A549 (cell line): ENCODE measurements at regions of chr17 and their contacts with region 1.

Region 1: GRCh38 chr17:72556944-72557826 is 436.4 kb downstream of the SOX9 start:
- DNase-seq: peak; percentile 83 to 93
- ATAC-seq: peak; percentile 51 to 62
- H3K4me3 ChIP-seq: no peak overlapping the region
- H3K27ac ChIP-seq: peak overlapping the region in 1 of 2 experiments; percentile 61; a peak in 3 of 6 replicates
- H3K4me1 ChIP-seq: peaks cover 45% of the 10 kb centered on the region
- CTCF ChIP-seq: peak; percentile 97
- EP300 ChIP-seq: no peak
- POLR2A ChIP-seq: no peak
- RAD21 ChIP-seq: peak; percentile 94

Region 2: DNA sequence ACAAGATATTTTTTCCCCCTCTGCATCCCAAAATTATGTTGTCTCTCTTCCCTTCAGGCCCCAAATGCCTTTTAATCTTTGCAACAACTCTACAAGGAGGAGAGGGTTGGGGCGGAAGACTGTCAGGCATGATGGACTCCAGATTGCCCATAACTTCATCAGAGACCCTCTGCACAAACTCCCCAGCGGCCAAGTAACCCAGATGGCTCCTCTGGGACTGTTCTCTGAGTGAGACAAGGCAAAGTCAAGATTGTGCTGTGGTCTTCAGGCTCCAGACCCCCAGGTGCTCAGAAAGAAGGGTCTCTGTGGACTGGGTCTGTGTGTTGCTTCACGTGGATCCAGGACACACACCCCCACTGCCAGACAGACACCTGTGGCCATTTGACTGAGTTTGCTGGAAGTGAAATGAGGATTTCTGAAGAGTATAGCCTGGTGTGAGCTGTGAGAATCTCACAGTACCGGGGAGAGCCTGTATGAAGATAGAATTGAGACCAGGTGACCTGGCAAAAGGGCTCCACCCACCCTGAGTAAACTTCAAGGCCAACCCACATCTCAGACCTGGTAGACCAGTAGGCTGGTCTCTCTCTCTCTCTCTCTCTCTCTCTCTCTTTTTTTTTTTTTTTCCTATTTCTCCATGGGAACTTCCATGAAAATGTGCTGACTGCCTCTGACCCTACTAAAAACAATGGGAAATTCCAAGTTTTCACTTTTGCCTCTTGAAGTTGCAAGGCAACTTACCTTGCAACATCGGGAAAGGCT is 82.3 kb before region 1 on chr17:
- CTCF ChIA-PET with region 1: no interaction called
- POLR2A ChIA-PET with region 1: no interaction called
- DNase-seq: peak in 1 of 2 experiments; percentile 55
- ATAC-seq: peak; percentile 75 to 77
- H3K4me3 ChIP-seq: no peak overlapping the region
- H3K27ac ChIP-seq: peak overlapping the region; percentile 3 to 37; a peak in 3 of 6 replicates
- H3K4me1 ChIP-seq: peaks cover 71% of the 10 kb centered on the region
- CTCF ChIP-seq: no peak
- EP300 ChIP-seq: no peak
- POLR2A ChIP-seq: no peak
- RAD21 ChIP-seq: no peak

Region 3: GRCh38 chr17:72539981-72540897 is 16.9 kb before region 1 on chr17:
- CTCF ChIA-PET with region 1: interaction called, 32 read pairs
- POLR2A ChIA-PET with region 1: no interaction called
- DNase-seq: peak; percentile 79 to 86
- ATAC-seq: peak; percentile 90 to 94
- H3K4me3 ChIP-seq: peak overlapping the region; percentile 22
- H3K27ac ChIP-seq: peak overlapping the region; percentile 82 to 87
- H3K4me1 ChIP-seq: peaks cover 25% of the 10 kb centered on the region
- CTCF ChIP-seq: peak; percentile 99
- EP300 ChIP-seq: no peak
- POLR2A ChIP-seq: no peak
- RAD21 ChIP-seq: peak; percentile 92 to 100

Region 4: GRCh38 chr17:72602517-72603419 is 45.6 kb after region 1 on chr17:
- CTCF ChIA-PET with region 1: interaction called, 112 read pairs
- POLR2A ChIA-PET with region 1: interaction called, 4 read pairs
- DNase-seq: peak; percentile 97
- ATAC-seq: peak; percentile 92 to 93
- H3K4me3 ChIP-seq: 0 out of 3 replicates have a peak overlapping the region, but pooled peaks have one; percentile 10
- H3K27ac ChIP-seq: peak overlapping the region; percentile 90 to 95
- H3K4me1 ChIP-seq: peaks cover 65% of the 10 kb centered on the region
- CTCF ChIP-seq: no peak
- EP300 ChIP-seq: peak; percentile 72 to 79; a peak in 2 of 5 replicates
- POLR2A ChIP-seq: no peak
- RAD21 ChIP-seq: peak; percentile 32 to 33; a peak in 2 of 5 replicates

Region 5: DNA sequence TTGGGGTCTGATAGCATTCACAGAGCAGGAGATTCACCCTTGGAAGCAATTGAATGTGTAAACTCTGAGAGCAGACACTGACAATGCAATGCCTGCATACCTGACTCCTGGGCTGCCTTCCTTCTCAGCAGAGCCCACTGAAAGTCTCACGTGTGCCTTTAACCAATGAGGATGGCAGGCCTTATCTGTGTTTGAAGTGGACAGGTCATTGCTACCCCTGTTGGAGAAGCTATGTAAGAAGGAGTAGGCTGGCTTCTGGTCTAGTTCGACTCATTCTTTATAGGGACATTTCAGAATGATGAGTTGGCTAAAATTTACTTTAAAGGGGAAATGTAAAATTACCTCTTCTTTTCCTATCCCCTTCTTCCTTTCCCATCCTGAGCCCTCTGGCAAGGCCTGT is 89.0 kb after region 1 on chr17:
- CTCF ChIA-PET with region 1: interaction called, 35 read pairs
- POLR2A ChIA-PET with region 1: no interaction called
- DNase-seq: peak in 1 of 2 experiments; percentile 17
- ATAC-seq: peak in 1 of 2 experiments; percentile 45; a peak in 2 of 6 replicates
- H3K4me3 ChIP-seq: no peak overlapping the region
- H3K27ac ChIP-seq: peak overlapping the region in 1 of 2 experiments; percentile 22; a peak in 2 of 6 replicates
- H3K4me1 ChIP-seq: no peaks in the 10 kb centered on the region
- CTCF ChIP-seq: no peak
- EP300 ChIP-seq: no peak
- POLR2A ChIP-seq: no peak
- RAD21 ChIP-seq: no peak

Region 6: GRCh38 chr17:72683506-72684404 is 126.6 kb after region 1 on chr17:
- CTCF ChIA-PET with region 1: interaction called, 240 read pairs
- POLR2A ChIA-PET with region 1: no interaction called
- DNase-seq: peak; percentile 98 to 100
- ATAC-seq: peak; percentile 91 to 94
- H3K4me3 ChIP-seq: peak overlapping the region; percentile 6; the same call in 1 of the 3 replicates
- H3K27ac ChIP-seq: peak overlapping the region; percentile 89 to 94
- H3K4me1 ChIP-seq: peaks cover 48% of the 10 kb centered on the region
- CTCF ChIP-seq: no peak
- EP300 ChIP-seq: peak; percentile 96 to 97
- POLR2A ChIP-seq: no peak
- RAD21 ChIP-seq: peak; percentile 57 to 80

Region 7: DNA sequence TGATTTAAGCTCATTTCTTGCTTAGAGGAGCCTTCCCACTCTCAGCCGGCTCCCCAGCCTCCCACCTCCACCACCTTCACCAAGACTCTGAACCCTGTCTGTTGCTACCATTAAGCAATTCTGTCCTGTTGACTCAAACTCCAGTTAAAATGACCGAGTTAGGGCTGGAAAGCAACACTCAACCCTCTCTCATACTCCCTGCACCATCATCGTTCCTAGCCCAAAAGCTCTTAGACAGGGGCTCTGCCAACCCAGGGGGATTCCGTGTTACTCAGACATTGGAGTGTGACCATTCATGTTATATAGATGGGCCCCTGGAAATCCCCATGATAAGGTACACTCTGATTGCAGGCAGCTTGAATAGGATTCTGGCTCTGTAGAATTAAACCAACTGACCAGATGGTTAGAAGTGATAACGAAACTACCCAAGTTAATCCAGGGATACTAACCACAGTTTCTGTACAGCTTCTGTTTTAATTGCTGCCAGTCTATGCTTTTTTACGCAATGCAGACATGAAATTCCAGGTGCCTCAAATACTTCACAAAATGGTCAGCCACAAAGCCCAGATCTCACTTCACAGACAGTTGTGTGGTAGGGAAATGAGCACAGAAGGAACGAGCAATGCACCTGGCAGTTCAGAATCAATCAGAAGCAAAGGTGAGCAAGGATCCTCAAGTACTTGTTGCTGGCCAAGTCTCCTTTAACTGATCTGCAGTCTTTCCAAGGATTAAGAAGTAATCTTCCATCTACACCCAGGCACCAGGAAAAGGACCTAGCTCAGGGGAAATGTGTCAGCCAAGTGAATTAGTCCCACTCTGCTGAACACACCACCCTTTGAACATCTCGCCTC is 609.8 kb after region 1 on chr17:
- CTCF ChIA-PET with region 1: interaction called, 11 read pairs
- POLR2A ChIA-PET with region 1: no interaction called
- DNase-seq: no peak
- ATAC-seq: no peak
- H3K4me3 ChIP-seq: peak overlapping the region; percentile 56; the same call in 2 of the 3 replicates
- H3K27ac ChIP-seq: no peak overlapping the region
- H3K4me1 ChIP-seq: peaks cover 27% of the 10 kb centered on the region
- CTCF ChIP-seq: no peak
- EP300 ChIP-seq: no peak
- POLR2A ChIP-seq: no peak
- RAD21 ChIP-seq: no peak